ENCODE measurements at regions of chr12 and their contacts with region 1.

Region 1: DNA sequence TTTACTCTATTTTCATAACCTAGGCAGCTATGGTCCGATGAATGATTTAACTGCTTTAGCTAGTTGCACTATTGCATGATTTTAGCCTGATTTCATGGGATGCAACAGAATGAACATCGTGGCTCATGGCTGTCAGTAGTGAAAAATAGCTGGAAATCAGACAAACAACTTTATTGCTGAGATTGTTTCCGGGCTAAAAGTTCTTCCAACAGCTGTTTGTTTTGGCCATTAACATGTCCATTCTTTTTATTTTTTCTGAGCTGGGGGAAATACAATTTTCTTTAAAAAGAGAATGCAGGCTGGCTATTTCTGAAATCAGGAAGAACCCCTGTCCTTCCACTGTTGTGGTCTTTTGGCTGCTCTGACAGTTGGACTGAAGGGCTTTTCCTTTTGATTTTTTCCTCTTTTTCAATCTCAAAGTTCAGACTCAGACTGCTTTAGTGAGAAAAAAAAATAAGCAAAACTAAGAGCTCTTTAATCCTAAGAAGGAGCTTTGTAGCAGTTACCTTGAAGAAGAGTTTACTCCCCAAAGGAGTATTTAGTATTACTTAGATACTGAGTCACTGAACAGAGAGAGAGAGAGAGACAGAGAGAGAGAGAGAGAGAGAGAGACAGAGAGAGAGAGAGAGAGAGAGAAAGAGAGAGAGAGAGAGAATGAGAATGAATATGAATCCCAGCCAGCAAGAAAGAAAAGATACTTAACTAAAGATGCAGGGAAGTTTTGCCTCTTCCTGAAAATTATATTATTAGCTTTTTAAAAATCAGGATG is at the start of gene NAV3:
- DNase-seq: peak; percentile 97
- H3K4me3 ChIP-seq: peak within 1 kb of the TSS in 1 of 3 experiments; percentile 25
- H3K27ac ChIP-seq: peak within 1 kb of the TSS; percentile 46
- H3K4me1 ChIP-seq: peaks cover 29% of the 10 kb centered on the region
- H3K27me3 ChIP-seq: no peaks in the 10 kb centered on the region
- CTCF ChIP-seq: no peak
- POLR2A ChIP-seq: peak; percentile 42
- total RNA-seq, gene NAV3: 37.8 and 40.1 TPM in 2 replicates

Region 2: DNA sequence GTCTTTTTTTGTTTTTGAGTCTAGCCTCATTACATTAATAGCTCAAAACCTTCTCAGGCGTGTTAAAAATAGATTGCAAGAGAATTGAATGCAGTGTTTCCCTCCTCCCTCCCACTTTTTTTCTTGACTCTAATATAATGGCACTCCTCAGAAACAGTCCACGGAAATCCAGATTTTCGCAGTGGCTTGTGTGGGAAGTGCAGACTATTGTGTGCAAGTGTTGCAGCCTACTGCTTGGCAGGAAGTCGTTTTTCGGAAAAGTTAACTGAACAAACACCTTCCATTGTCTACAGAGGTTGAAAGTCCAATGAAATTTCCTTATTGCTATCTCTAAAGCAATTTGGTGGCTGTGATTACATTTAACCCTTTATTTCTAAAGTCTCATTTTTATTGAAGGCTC is 617.4 kb before region 1 on chr12:
- CTCF ChIA-PET with region 1: no interaction called
- POLR2A ChIA-PET with region 1: no interaction called
- dilution Hi-C with region 1: no loop called
- intact Hi-C with region 1: loop called (anchors 10 kb)
- DNase-seq: peak; percentile 98
- H3K4me3 ChIP-seq: no peak overlapping the region
- H3K27ac ChIP-seq: peak overlapping the region; percentile 28
- H3K4me1 ChIP-seq: peaks cover 15% of the 10 kb centered on the region
- H3K27me3 ChIP-seq: peaks cover 3% of the 10 kb centered on the region in 2 experiments
- CTCF ChIP-seq: peak in 1 of 2 donors; percentile 14
- POLR2A ChIP-seq: no peak

Region 3: GRCh38 chr12:77354766-77355362 is 475.9 kb before region 1 on chr12:
- CTCF ChIA-PET with region 1: no interaction called
- POLR2A ChIA-PET with region 1: no interaction called
- dilution Hi-C with region 1: no loop called
- intact Hi-C with region 1: no loop called
- DNase-seq: peak; percentile 17
- H3K4me3 ChIP-seq: no peak overlapping the region
- H3K27ac ChIP-seq: no peak overlapping the region
- H3K4me1 ChIP-seq: no peaks in the 10 kb centered on the region
- H3K27me3 ChIP-seq: no peaks in the 10 kb centered on the region
- CTCF ChIP-seq: no peak
- POLR2A ChIP-seq: no peak

Region 4: GRCh38 chr12:77645966-77646598 is 184.7 kb before region 1 on chr12:
- CTCF ChIA-PET with region 1: no interaction called
- POLR2A ChIA-PET with region 1: no interaction called
- dilution Hi-C with region 1: no loop called
- intact Hi-C with region 1: no loop called
- DNase-seq: no peak
- H3K4me3 ChIP-seq: no peak overlapping the region
- H3K27ac ChIP-seq: no peak overlapping the region
- H3K4me1 ChIP-seq: no peaks in the 10 kb centered on the region
- H3K27me3 ChIP-seq: no peaks in the 10 kb centered on the region
- CTCF ChIP-seq: no peak
- POLR2A ChIP-seq: no peak

Region 5: DNA sequence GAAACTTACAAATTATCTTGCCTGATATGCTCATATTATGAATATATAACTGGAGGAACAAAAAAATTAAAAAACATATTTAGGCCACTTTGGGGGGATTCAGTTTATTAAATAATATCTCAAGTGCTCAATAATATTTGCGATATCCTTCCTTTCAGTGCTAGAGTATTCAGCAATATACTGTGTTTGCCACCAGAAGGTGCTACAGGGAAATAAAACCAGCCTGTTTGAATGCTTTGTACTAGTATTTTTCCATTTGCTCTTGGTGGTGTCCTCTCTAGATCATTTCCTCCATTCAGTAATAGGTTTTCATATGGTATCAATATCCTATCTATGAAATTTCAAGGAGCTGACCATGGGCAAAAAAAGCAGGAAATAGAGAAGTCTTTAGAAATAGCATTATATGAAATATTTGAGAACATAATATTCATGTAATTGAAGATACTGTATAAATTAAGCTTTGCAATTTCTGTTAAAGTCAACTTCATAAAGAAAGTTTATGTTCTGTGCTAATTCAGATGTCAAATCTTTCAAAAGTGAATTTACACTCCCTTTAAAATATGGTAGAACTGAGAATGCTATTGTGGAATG is 106.3 kb before region 1 on chr12:
- CTCF ChIA-PET with region 1: interaction called, 16 read pairs
- POLR2A ChIA-PET with region 1: no interaction called
- dilution Hi-C with region 1: no loop called
- intact Hi-C with region 1: loop called (anchors 1 kb)
- DNase-seq: peak; percentile 61
- H3K4me3 ChIP-seq: no peak overlapping the region
- H3K27ac ChIP-seq: no peak overlapping the region
- H3K4me1 ChIP-seq: no peaks in the 10 kb centered on the region
- H3K27me3 ChIP-seq: no peaks in the 10 kb centered on the region
- CTCF ChIP-seq: peak; percentile 49 to 56
- POLR2A ChIP-seq: no peak

Region 6: DNA sequence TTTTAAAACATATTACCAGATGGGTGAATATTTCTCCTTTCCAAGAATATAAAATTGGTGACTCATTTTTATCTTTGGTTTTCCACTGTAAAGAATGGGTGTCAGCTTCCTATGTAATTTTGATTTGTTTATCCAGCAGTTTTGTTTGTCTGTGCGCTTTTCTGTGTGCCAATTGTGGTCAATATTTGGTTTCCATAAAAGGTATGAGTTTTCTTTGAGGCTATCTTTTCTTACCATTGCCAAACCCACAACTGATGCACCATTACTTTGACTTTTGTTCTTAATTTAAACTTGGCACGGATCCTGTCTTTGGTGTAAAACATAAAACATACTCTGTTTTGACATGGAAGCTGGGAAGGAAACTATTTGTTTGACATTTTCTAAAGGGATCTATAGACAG is 78.8 kb before region 1 on chr12:
- CTCF ChIA-PET with region 1: interaction called, 4 read pairs
- POLR2A ChIA-PET with region 1: no interaction called
- dilution Hi-C with region 1: no loop called
- intact Hi-C with region 1: loop called (anchors 1 kb)
- DNase-seq: peak; percentile 82
- H3K4me3 ChIP-seq: peak overlapping the region in 1 of 3 experiments; percentile 8
- H3K27ac ChIP-seq: peak overlapping the region; percentile 37
- H3K4me1 ChIP-seq: peaks cover 15% of the 10 kb centered on the region
- H3K27me3 ChIP-seq: no peaks in the 10 kb centered on the region
- CTCF ChIP-seq: no peak
- POLR2A ChIP-seq: no peak

Region 7: DNA sequence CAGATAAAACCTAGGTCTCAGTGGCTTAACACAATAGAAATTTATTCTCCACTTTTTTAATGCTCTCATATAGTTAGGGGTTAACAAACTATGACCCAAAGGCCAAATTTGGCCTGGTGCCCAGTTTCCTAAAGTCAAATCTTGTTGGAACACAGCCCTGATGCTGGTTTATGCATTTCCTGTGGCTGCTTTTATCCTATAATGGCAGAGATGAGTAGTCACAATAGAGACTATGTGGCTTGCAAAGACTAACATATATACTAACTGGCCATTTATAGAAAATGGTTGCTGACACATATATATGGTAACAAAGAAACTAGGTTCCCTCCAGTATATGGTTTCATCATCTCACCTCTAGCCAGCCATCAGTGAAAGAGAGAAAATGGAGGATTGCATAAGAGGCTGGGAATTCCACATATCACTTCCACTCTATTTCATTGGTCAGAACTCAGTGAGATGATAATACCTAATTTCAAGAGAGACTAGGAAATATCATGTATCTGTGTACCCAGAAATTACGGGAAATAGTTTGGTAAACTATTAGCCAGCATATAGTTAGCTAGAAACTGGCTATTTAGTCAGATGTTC is 10.8 kb after region 1 on chr12:
- CTCF ChIA-PET with region 1: interaction called, 12 read pairs
- POLR2A ChIA-PET with region 1: no interaction called
- dilution Hi-C with region 1: no loop called
- intact Hi-C with region 1: no loop called
- DNase-seq: peak; percentile 83
- H3K4me3 ChIP-seq: no peak overlapping the region
- H3K27ac ChIP-seq: peak overlapping the region; percentile 4
- H3K4me1 ChIP-seq: peaks cover 32% of the 10 kb centered on the region
- H3K27me3 ChIP-seq: no peaks in the 10 kb centered on the region
- CTCF ChIP-seq: no peak
- POLR2A ChIP-seq: no peak

Region 8: GRCh38 chr12:77847060-77847541 is 16.3 kb after region 1 on chr12:
- CTCF ChIA-PET with region 1: interaction called, 12 read pairs
- POLR2A ChIA-PET with region 1: interaction called, 5 read pairs
- dilution Hi-C with region 1: no loop called
- intact Hi-C with region 1: loop called (anchors 1 kb)
- DNase-seq: peak; percentile 40
- H3K4me3 ChIP-seq: no peak overlapping the region
- H3K27ac ChIP-seq: peak overlapping the region; percentile 78
- H3K4me1 ChIP-seq: peaks cover 44% of the 10 kb centered on the region
- H3K27me3 ChIP-seq: no peaks in the 10 kb centered on the region
- CTCF ChIP-seq: no peak
- POLR2A ChIP-seq: no peak

Region 9: GRCh38 chr12:77888611-77889010 is 57.8 kb after region 1 on chr12:
- CTCF ChIA-PET with region 1: interaction called, 3 read pairs
- POLR2A ChIA-PET with region 1: no interaction called
- dilution Hi-C with region 1: no loop called
- intact Hi-C with region 1: loop called (anchors 1 kb)
- DNase-seq: peak; percentile 97
- H3K4me3 ChIP-seq: no peak overlapping the region
- H3K27ac ChIP-seq: peak overlapping the region; percentile 39
- H3K4me1 ChIP-seq: peaks cover 15% of the 10 kb centered on the region
- H3K27me3 ChIP-seq: no peaks in the 10 kb centered on the region
- CTCF ChIP-seq: no peak
- POLR2A ChIP-seq: no peak

Measured in endothelial cell of umbilical vein (primary cell).